ENCODE measurements at regions of chr1 and their contacts with region 1.

Region 1: GRCh38 chr1:243343970-243344937 is 88.4 kb downstream of the SDCCAG8 start:
- DNase-seq: peak in 4 of 5 donors; percentile 47 to 52 (median 50)
- H3K4me3 ChIP-seq: no peak overlapping the region
- H3K4me3 Mint-ChIP-seq: no peak overlapping the region
- H3K27ac ChIP-seq: no peak overlapping the region
- H3K27ac Mint-ChIP-seq: no peak overlapping the region
- H3K4me1 ChIP-seq: no peaks in the 10 kb centered on the region
- H3K4me1 Mint-ChIP-seq: peaks cover 0 to 4% (median 3%) of the 10 kb centered on the region in 4 donors
- H3K27me3 ChIP-seq: no peaks in the 10 kb centered on the region
- H3K27me3 Mint-ChIP-seq: no peaks in the 10 kb centered on the region

Region 2: GRCh38 chr1:243354511-243355153 is 10.4 kb after region 1 on chr1:
- CTCF ChIA-PET with region 1: interaction called, 10 read pairs
- POLR2A ChIA-PET with region 1: no interaction called
- intact Hi-C with region 1: no loop called
- DNase-seq: no peak
- H3K4me3 ChIP-seq: peak overlapping the region in 1 of 2 donors; percentile 6
- H3K4me3 Mint-ChIP-seq: peak overlapping the region; percentile 58 to 81 (median 74)
- H3K27ac ChIP-seq: no peak overlapping the region
- H3K27ac Mint-ChIP-seq: peak overlapping the region in 5 of 7 donors; percentile 11 to 84 (median 67)
- H3K4me1 ChIP-seq: peaks cover 15% of the 10 kb centered on the region
- H3K4me1 Mint-ChIP-seq: peaks cover 16 to 21% (median 18%) of the 10 kb centered on the region in 4 donors
- H3K27me3 ChIP-seq: no peaks in the 10 kb centered on the region
- H3K27me3 Mint-ChIP-seq: no peaks in the 10 kb centered on the region

Region 3: DNA sequence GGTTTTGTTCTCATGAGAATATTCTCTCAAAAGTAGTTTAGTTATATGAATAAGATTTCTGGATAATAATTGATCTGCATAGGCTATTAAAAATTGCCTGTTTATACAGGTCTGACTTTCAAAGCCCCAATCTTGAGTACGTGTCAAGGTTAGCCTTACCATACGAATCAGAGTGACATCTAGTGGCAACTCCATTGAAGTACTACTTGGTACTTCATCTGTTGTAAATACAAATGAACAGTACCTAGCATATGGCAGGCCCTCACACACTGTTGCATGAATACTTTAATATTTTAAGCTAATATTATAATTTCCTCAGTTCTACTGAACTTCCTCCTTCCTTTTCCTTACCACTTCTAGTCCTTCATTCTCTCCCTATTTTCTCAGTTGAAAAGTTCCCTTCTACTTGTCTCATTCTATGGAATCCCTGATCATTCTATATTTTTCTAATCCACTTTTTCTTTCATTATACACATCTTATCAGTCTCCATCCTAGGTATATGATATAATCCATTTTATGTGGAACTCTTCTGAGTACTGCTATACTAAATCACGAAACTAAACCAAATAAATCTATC is 404.5 kb after region 1 on chr1:
- CTCF ChIA-PET with region 1: interaction called, 16 read pairs
- POLR2A ChIA-PET with region 1: no interaction called
- intact Hi-C with region 1: loop called (anchors 1 kb)
- DNase-seq: peak in 4 of 5 donors; percentile 32 to 56 (median 44)
- H3K4me3 ChIP-seq: no peak overlapping the region
- H3K4me3 Mint-ChIP-seq: no peak overlapping the region
- H3K27ac ChIP-seq: no peak overlapping the region
- H3K27ac Mint-ChIP-seq: peak overlapping the region in 5 of 7 donors; percentile 14 to 75 (median 29)
- H3K4me1 ChIP-seq: peaks cover 5% of the 10 kb centered on the region
- H3K4me1 Mint-ChIP-seq: peaks cover 28 to 46% (median 36%) of the 10 kb centered on the region in 4 donors
- H3K27me3 ChIP-seq: no peaks in the 10 kb centered on the region
- H3K27me3 Mint-ChIP-seq: no peaks in the 10 kb centered on the region

Region 4: DNA sequence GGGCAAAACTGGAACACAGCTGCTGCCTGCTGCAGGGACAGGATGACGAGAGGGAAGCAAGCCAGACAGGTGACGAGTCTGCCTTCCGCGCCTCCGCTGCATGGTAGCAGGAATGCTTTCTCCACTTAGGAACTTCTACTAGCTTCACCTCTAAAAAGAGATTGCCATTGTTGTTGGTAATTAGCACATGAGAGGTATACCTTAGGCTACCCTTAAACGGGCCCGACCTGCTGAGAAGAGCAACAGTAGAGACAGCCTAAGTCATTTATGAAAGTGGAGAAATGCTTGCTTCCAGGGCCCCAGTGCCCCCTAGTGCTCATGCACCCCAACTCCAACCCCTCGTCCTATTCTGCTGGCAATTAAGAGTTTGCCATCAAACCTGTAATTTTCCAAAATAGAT is 602.7 kb after region 1 on chr1:
- CTCF ChIA-PET with region 1: interaction called, 35 read pairs
- POLR2A ChIA-PET with region 1: no interaction called
- intact Hi-C with region 1: no loop called
- DNase-seq: peak in 4 of 5 donors; percentile 34 to 41 (median 38)
- H3K4me3 ChIP-seq: no peak overlapping the region
- H3K4me3 Mint-ChIP-seq: peak overlapping the region in 1 of 8 donors; percentile 73
- H3K27ac ChIP-seq: no peak overlapping the region
- H3K27ac Mint-ChIP-seq: peak overlapping the region in 1 of 7 donors; percentile 66
- H3K4me1 ChIP-seq: no peaks in the 10 kb centered on the region
- H3K4me1 Mint-ChIP-seq: peaks cover 0 to under 1% (median 0%) of the 10 kb centered on the region in 4 donors
- H3K27me3 ChIP-seq: no peaks in the 10 kb centered on the region
- H3K27me3 Mint-ChIP-seq: peaks cover 0 to 2% of the 10 kb centered on the region in 2 donors

Region 5: GRCh38 chr1:244302889-244303613 is 958.8 kb after region 1 on chr1:
- CTCF ChIA-PET with region 1: interaction called, 15 read pairs
- POLR2A ChIA-PET with region 1: no interaction called
- intact Hi-C with region 1: loop called (anchors 1 kb)
- DNase-seq: no peak
- H3K4me3 ChIP-seq: no peak overlapping the region
- H3K4me3 Mint-ChIP-seq: no peak overlapping the region
- H3K27ac ChIP-seq: no peak overlapping the region
- H3K27ac Mint-ChIP-seq: no peak overlapping the region
- H3K4me1 ChIP-seq: peaks cover 10% of the 10 kb centered on the region
- H3K4me1 Mint-ChIP-seq: peaks cover 6 to 14% (median 8%) of the 10 kb centered on the region in 4 donors
- H3K27me3 ChIP-seq: no peaks in the 10 kb centered on the region
- H3K27me3 Mint-ChIP-seq: no peaks in the 10 kb centered on the region